Activated CD4-positive, alpha-beta memory T cell treated with anti-CD3 and anti-CD28 coated beads for 36 hours (primary cell): ENCODE measurements at regions of chr4 and their contacts with region 1.

Region 1: DNA sequence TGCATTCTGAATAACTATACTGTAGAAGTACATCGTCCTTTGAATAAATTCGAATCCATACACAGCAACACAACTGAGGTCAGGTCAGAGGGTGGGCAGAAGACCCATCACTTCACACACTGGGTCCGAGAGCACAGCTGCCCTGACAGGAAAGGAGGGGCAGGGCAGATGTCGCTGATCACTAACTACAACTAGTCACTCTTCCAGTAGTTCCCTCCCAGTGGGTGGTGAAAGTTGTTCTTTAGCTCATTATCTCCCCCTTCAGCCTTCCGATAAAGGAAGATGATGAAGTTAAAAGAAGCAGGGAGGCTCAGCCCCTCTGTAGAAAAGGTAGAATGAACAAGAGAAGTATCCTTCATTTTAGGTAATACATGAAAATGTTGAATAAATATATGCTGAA is 278.9 kb downstream of the INPP4B start:
- DNase-seq: peak; percentile 75
- H3K4me3 Mint-ChIP-seq: peak overlapping the region; percentile 79
- H3K27ac Mint-ChIP-seq: peak overlapping the region; percentile 94
- H3K4me1 Mint-ChIP-seq: peaks cover 52% of the 10 kb centered on the region
- H3K27me3 Mint-ChIP-seq: no peaks in the 10 kb centered on the region

Region 2: GRCh38 chr4:141636082-141636770 is 931.0 kb before region 1 on chr4 and contains the start of gene IL15:
- CTCF ChIA-PET with region 1: no interaction called
- POLR2A ChIA-PET with region 1: no interaction called
- intact Hi-C with region 1: loop called (anchors 10 kb)
- DNase-seq: peak; percentile 86
- H3K4me3 Mint-ChIP-seq: peak within 1 kb of the TSS; percentile 88
- H3K27ac Mint-ChIP-seq: peak within 1 kb of the TSS; percentile 64
- H3K4me1 Mint-ChIP-seq: peaks cover 27% of the 10 kb centered on the region
- H3K27me3 Mint-ChIP-seq: peaks cover 2% of the 10 kb centered on the region
- total RNA-seq, gene IL15: 1.4 to 2.2 TPM

Region 3: GRCh38 chr4:142282870-142283431 is 284.2 kb before region 1 on chr4:
- CTCF ChIA-PET with region 1: interaction called, 11 read pairs
- POLR2A ChIA-PET with region 1: no interaction called
- intact Hi-C with region 1: loop called (anchors 2 kb)
- DNase-seq: no peak
- H3K4me3 Mint-ChIP-seq: no peak overlapping the region
- H3K27ac Mint-ChIP-seq: no peak overlapping the region
- H3K4me1 Mint-ChIP-seq: peaks cover 26% of the 10 kb centered on the region
- H3K27me3 Mint-ChIP-seq: no peaks in the 10 kb centered on the region

Region 4: DNA sequence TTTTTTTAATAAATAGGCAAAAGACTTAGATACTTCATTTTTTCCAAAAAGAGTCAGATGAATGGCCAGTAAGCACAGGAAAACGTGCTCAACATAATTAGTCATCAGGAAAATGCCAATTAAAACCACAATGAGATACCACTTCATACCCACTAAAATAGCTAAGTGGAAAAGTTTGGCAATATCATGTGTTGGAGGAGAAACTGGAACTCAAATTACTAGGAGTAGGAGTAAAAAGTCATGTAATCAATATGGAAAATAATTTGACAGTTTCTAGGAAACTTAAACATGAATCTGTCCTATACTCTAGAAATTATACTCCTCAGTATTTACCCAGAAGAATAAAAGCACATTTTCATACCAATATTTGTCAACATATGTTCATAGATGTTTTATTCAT is 170.9 kb before region 1 on chr4:
- CTCF ChIA-PET with region 1: interaction called, 9 read pairs
- POLR2A ChIA-PET with region 1: interaction called, 58 read pairs
- intact Hi-C with region 1: loop called (anchors 2 kb)
- DNase-seq: no peak
- H3K4me3 Mint-ChIP-seq: peak overlapping the region; percentile 74
- H3K27ac Mint-ChIP-seq: peak overlapping the region; percentile 90
- H3K4me1 Mint-ChIP-seq: peaks cover 74% of the 10 kb centered on the region
- H3K27me3 Mint-ChIP-seq: no peaks in the 10 kb centered on the region

Region 5: DNA sequence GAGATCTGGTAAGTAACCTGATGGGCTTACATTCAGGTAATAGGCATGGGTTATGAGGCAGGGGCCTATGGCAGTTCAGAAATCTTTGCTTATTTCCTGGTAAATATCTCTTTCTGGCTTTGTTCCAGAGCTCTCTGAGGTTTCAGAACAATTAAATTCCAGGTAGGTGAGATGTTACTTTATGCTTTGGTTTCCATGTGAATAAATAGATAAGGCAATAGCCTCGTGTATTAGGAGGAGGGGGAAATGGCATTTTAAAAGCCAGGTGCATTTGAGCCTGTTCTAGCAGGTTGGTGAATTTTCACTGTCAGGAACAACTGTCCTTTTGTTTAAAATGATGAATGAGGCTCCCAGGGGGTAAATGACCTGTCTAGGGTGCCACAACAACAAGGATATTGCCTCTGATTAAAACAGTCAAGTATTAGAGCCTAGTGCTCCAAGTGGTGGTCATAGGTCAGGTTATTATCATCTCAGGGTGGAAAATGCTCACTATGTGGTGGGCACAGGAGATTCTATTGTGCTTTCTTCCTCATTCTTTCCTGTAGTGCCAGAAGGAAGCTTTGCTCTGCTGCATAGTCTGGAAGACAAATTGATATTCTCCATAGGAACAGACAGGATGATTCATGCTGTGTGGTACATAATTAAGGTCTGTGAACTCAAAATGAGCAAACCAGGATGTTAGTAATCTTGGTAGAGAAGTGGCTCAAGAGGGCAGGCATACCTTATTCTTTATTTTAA is 17.3 kb before region 1 on chr4:
- CTCF ChIA-PET with region 1: interaction called, 3 read pairs
- POLR2A ChIA-PET with region 1: interaction called, 6 read pairs
- intact Hi-C with region 1: loop called (anchors 1 kb)
- DNase-seq: no peak
- H3K4me3 Mint-ChIP-seq: no peak overlapping the region
- H3K27ac Mint-ChIP-seq: peak overlapping the region; percentile 51
- H3K4me1 Mint-ChIP-seq: peaks cover 72% of the 10 kb centered on the region
- H3K27me3 Mint-ChIP-seq: no peaks in the 10 kb centered on the region

Region 6: DNA sequence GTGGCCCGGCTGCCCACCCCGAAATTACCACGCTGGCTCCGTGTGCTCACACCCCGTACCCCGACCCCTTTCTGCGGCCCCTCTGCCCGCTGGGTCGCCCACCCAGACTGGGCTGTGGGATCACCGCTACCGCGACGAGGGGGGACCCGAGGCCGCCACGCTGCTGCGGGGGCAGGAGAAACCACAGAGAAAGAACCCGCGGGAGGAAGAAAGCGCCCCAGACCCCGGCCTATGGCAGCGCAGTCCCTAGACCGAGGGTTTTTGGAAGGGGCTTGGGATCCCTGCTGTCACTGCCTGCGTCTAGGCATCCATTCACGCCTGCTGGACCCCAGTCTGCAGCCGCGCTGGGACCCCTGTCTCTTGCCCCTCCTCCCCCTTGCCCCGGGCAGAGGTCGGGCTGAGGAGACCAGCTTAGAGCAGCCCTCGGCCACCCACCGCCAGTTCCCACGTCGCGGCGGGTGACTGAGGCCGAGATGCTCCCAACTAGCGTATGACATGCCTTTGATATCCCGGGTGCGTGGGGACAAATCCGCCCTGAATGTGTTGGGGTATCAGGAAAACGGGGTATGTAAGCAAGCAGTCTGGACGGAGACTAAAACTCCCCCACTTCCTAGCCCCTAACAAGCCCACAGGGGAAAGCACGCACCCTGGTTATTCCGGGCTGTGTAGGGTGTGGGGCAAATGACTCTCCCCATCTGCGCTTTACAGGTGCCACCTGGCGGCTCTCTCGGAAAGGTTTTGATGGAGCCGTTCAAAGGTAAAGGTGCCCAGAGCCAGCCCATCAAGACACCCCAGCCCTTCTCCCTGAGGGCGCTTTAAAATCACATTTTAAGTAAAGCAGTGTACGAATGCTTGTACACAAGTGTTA is 279.8 kb after region 1 on chr4:
- CTCF ChIA-PET with region 1: interaction called, 3 read pairs
- POLR2A ChIA-PET with region 1: interaction called, 3 read pairs
- intact Hi-C with region 1: loop called (anchors 2 kb)
- DNase-seq: peak; percentile 87
- H3K4me3 Mint-ChIP-seq: peak overlapping the region; percentile 87
- H3K27ac Mint-ChIP-seq: peak overlapping the region; percentile 43
- H3K4me1 Mint-ChIP-seq: peaks cover 19% of the 10 kb centered on the region
- H3K27me3 Mint-ChIP-seq: peaks cover 7% of the 10 kb centered on the region

Region 7: GRCh38 chr4:143575331-143575730 is 1008.1 kb after region 1 on chr4:
- CTCF ChIA-PET with region 1: no interaction called
- POLR2A ChIA-PET with region 1: no interaction called
- intact Hi-C with region 1: no loop called
- DNase-seq: no peak
- H3K4me3 Mint-ChIP-seq: no peak overlapping the region
- H3K27ac Mint-ChIP-seq: no peak overlapping the region
- H3K4me1 Mint-ChIP-seq: no peaks in the 10 kb centered on the region
- H3K27me3 Mint-ChIP-seq: no peaks in the 10 kb centered on the region